Activated CD8-positive, alpha-beta memory T cell treated with anti-CD3 and anti-CD28 coated beads, Interleukin-2, amount 10 ng/mL, durations not matched to agents 7 days and 5 days (primary cell): ENCODE measurements at regions of chr10 and their contacts with region 1.

Region 1: DNA sequence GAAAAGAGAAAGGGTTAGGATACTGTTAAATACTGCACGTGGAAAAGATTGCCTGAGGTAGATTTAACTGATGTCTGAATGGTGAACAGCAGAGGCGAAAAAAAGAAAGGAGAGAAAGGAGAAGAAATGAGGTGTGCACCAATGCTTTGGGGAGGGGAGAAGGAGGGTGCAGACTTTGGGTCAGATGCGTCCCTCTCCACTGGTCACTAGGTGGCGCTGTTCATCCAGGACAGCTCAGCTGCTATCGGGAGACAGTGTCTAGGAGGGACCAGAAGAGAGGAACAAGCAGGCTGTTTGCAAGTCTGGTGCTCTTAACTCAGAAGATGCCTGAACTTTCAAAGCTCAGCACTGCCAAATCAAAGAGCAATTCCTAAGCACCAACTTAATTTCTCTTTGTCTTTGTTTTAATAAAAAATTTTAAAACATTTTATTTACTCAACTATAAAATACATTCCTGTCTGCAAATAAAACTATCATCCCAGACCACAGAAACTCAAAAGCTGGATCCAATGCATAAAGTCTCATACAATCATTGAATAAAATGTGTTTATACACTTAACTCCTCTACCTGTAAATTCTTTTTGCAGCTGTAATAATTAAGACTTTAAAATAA is 83.9 kb upstream of the PDLIM1 start:
- DNase-seq: peak; percentile 85
- ATAC-seq: peak; percentile 96
- H3K4me3 Mint-ChIP-seq: no peak overlapping the region
- H3K27ac Mint-ChIP-seq: no peak overlapping the region
- H3K4me1 Mint-ChIP-seq: peaks cover 7% of the 10 kb centered on the region
- H3K27me3 Mint-ChIP-seq: peaks cover 46% of the 10 kb centered on the region

Region 2: GRCh38 chr10:95363303-95363912 is 11.3 kb before region 1 on chr10:
- CTCF ChIA-PET with region 1: interaction called, 82 read pairs
- DNase-seq: peak; percentile 63
- ATAC-seq: peak; percentile 78
- H3K4me3 Mint-ChIP-seq: no peak overlapping the region
- H3K27ac Mint-ChIP-seq: no peak overlapping the region
- H3K4me1 Mint-ChIP-seq: no peaks in the 10 kb centered on the region
- H3K27me3 Mint-ChIP-seq: peaks cover 32% of the 10 kb centered on the region

Region 3: GRCh38 chr10:95388539-95388938 is 13.8 kb after region 1 on chr10:
- CTCF ChIA-PET with region 1: interaction called, 47 read pairs
- DNase-seq: no peak
- ATAC-seq: no peak
- H3K4me3 Mint-ChIP-seq: no peak overlapping the region
- H3K27ac Mint-ChIP-seq: no peak overlapping the region
- H3K4me1 Mint-ChIP-seq: peaks cover 3% of the 10 kb centered on the region
- H3K27me3 Mint-ChIP-seq: peaks cover 21% of the 10 kb centered on the region

Region 4: DNA sequence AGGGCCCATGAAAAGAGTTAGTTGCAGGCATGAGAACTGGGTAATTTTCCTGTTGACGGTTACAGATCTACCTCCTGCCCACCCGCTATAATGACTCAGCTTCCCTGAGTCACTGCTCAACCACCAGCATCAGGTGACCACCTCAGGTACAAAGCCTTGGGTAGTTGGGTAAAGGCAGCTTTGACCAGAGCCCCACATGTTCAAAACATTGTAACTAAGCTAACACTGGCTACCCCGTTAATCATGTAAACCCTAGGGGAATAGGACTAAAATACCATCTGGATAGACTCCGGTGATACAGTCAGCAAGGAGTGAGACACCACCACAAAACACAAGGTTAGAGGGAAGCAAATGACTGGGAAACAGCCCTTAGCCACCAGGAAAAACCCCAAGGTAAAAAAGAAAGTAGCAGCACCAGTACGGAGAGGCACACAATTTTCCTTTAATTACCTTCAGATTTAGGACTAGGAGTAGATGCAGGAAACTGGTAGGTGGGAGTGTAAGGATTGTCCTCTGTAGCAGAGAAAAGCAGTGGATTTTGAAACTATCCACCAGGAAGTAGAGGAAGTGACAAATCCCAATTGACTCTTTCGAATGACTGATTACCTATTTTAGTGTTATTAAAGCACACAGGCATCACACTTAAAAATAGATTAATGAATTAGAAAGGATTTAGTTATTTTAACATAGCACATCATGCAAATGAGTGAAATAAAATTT is 19.6 kb after region 1 on chr10:
- CTCF ChIA-PET with region 1: interaction called, 47 read pairs
- DNase-seq: peak; percentile 73
- ATAC-seq: peak; percentile 84
- H3K4me3 Mint-ChIP-seq: peak overlapping the region; percentile 3
- H3K27ac Mint-ChIP-seq: no peak overlapping the region
- H3K4me1 Mint-ChIP-seq: peaks cover 13% of the 10 kb centered on the region
- H3K27me3 Mint-ChIP-seq: peaks cover 5% of the 10 kb centered on the region

Region 5: DNA sequence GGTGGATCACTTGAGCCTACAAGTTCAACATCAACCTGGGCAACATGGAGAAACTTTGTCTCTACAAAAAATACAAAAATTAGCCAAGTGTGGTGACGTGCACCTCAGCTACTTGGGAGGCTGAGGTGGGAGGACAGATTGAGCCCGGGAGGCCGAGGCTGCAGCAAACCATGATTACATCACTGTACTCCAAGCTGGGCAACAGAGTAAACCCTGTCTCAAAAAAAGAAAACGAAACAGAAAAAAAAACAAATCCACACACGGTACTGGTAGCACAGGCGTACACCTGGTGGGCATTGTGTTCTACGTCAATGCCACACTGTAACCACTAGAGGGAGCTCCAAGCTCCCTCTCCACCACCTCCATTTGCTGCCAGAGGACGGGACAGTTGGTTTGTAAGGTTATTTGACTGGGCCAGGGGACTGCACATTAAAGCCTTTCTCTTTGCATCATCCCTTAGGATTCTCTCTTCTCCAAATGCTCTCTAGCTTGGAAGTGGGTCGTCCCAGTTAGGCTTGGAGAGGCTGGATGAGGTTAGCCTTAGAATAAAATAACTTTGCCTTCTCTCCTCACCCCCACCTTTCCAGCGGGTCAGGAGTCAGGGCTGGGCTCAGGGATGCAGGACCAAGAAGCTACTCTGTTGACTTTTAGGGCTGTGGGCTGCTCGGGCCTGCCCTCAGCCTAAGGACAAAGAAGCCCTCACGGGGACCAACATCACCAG is 55.7 kb after region 1 on chr10:
- CTCF ChIA-PET with region 1: interaction called, 33 read pairs
- DNase-seq: peak; percentile 55
- ATAC-seq: peak; percentile 93
- H3K4me3 Mint-ChIP-seq: no peak overlapping the region
- H3K27ac Mint-ChIP-seq: no peak overlapping the region
- H3K4me1 Mint-ChIP-seq: peaks cover 6% of the 10 kb centered on the region
- H3K27me3 Mint-ChIP-seq: peaks cover 17% of the 10 kb centered on the region

Region 6: DNA sequence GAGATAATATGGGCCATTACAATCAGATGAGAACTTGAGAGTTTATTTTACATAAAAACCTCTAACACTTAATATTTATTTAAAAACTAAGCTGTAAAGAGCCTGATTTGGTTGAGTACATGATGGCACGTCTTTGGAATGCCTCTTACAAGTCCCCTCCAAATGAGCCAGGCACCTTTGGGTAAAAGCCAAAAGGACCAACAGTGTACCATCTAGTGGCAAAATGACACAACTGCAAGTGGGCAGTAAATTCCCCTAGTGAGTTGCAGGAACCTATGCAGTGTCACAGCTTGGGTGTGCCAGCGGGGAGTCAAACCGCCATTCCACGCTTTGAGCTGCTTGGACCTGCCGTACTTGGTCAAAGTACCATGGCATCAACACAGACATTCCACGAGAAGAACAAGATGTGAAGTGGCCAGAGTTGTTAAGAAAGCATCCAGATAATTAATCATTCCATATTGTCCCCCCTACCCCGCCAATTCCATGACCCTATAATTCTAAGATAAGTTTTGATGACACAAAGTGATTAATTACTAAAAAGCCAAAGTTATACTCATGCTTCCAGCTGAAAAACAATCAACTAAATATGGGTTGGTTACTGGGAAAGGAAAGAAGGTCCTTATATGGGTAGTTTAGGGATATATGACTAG is 71.3 kb after region 1 on chr10:
- CTCF ChIA-PET with region 1: interaction called, 25 read pairs
- DNase-seq: peak; percentile 61
- ATAC-seq: peak; percentile 53
- H3K4me3 Mint-ChIP-seq: no peak overlapping the region
- H3K27ac Mint-ChIP-seq: no peak overlapping the region
- H3K4me1 Mint-ChIP-seq: peaks cover 11% of the 10 kb centered on the region
- H3K27me3 Mint-ChIP-seq: peaks cover 37% of the 10 kb centered on the region

Region 7: DNA sequence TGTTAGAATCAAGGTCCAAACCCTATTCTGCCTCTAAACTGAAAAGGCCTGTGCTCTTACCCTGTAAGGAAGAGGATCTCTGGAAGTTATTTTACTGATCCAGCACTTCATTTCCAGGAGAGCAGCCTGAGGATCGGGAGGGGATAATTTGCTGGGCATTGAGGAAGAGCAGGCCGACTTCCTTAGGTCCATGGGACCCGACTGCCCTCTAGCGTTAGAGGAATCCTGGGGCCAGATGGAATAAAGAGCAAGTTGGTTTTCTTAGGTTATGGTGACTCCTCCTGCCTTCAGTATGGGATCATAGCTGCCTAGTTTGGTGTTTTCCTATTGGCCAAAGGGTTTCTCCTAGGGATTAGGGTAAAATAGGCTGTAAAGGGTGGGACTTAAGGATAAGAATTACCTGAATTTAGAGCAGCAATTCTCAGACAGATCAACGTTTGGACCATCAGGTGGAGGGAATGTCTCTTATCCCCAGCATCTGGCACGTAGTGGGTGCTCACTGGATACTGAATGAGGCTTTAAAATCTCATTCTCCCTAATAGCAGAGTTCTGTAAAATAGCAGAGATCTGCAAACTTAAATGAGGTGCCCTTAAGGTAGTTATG is 226.5 kb after region 1 on chr10:
- CTCF ChIA-PET with region 1: interaction called, 50 read pairs
- DNase-seq: peak; percentile 59
- ATAC-seq: peak; percentile 51
- H3K4me3 Mint-ChIP-seq: no peak overlapping the region
- H3K27ac Mint-ChIP-seq: no peak overlapping the region
- H3K4me1 Mint-ChIP-seq: no peaks in the 10 kb centered on the region
- H3K27me3 Mint-ChIP-seq: peaks cover 12% of the 10 kb centered on the region